ENCODE measurements at regions of chr15 and their contacts with region 1.

Region 1: GRCh38 chr15:64369078-64369607 is 12.1 kb downstream of the PCLAF start:
- DNase-seq: no peak
- ATAC-seq: no peak

Region 2: DNA sequence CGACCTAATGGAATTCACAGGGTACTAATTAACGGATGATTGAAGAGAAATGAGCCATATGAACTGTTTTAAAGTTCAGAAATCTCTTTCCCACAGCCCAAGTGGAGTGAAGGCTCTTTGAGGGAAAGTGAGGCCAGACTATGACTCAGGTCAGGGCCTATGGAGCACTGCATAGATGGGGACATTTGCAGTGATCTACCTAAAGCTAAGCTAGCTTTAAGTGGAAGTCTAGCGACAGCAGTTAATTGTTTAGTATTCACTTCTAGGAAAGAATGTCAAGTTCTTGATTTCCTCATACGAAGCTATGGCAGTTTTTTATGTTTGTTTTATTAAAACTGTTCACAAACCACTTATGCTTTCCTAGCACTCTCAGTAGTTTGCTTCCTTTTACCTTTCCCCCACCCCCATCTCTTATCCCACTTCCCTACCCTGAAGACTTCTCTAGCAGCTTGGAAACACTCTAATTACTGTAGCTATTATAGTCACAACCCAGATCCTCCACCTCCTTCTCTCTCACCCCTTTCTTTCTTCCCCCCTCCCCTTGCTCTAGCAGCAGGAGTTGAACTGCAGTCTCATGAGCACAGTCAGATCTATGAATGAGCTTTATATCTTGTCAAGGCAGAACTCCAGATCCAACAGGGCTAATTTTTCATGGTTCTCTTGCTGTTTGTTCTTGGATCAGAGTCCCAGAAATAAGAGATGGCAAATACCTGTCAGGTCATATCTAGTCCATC is 97.4 kb after region 1 on chr15:
- intact Hi-C with region 1: no loop called
- DNase-seq: no peak
- ATAC-seq: no peak

Region 3: DNA sequence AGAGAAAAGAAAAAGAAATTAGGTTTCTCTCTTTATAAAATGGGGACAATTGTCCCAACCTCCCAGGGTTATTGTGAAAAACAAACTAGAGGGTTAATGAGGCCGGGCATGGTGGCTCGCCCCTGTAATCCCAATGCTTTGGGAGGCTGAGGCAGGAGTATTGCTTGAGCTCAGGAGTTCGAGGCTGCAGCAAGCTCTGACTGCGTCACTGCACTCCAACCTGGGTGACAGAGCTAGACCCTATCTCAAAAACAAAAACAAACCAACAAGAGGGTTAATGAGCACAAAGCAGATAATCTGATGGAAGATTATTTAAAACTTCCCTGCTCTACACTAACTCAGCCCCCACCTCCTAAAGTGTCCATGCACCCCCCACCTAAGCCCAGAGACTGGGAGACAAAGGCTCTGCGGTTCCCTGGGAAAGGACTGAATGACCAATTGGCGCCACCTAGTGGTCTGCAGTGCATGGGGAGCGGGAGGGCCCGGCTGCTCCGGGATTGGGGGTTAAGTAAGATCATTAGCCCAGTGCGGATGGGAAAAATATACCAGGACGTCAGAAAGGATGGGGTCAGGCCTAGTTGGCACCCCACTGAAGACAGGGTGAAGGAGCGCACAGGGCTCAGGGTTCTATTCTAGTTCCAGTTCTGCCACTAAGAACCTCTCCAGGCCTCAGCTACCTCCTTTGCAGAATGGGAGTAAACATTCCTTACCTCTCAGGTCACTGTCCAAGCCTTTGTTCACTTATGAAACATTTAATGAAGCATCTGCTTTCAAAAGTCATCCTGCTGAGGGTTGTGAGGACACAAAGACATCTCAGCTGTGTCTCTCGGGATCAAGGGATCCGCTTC is 440.7 kb after region 1 on chr15:
- intact Hi-C with region 1: loop called in 1 of 2 experiments (anchors 10 kb)
- DNase-seq: peak; percentile 71 to 87
- ATAC-seq: peak; percentile 76

Measured in left colon (tissue), 2 donors.